Heart left ventricle (tissue), 16 donors: ENCODE measurements at regions of chr2 and their contacts with region 1.

Region 1: DNA sequence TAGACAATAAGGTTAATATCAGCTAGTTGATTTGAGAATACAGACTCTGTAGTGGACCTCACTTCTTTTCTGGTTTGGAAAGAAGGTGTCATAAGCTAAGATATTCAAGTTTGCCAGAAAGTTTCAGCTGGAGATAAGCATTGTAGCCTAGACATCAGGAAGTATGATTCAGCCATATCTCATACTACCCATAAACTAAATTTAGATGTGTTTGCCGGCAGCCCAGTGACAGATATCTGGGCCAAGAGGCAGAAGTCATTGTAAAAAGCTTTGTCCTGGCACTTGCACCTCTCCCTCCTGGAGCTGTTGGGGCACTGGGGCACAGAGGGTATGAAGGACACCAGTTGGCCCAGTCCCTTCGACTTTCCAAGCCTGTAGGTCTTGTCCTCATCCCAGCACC is 128.0 kb downstream of the EPHA4 start:
- DNase-seq: peak in 4 of 5 donors; percentile 29 to 74 (median 62)
- ATAC-seq: peak; percentile 84 to 98 (median 94)
- H3K4me3 ChIP-seq: no peak overlapping the region
- H3K27ac ChIP-seq: peak overlapping the region in 10 of 12 donors; percentile 10 to 76 (median 40)
- H3K4me1 ChIP-seq: peaks cover 0 to 27% (median 12%) of the 10 kb centered on the region in 12 donors
- H3K27me3 ChIP-seq: no peaks in the 10 kb centered on the region
- CTCF ChIP-seq: no peak
- POLR2A ChIP-seq: no peak

Region 2: DNA sequence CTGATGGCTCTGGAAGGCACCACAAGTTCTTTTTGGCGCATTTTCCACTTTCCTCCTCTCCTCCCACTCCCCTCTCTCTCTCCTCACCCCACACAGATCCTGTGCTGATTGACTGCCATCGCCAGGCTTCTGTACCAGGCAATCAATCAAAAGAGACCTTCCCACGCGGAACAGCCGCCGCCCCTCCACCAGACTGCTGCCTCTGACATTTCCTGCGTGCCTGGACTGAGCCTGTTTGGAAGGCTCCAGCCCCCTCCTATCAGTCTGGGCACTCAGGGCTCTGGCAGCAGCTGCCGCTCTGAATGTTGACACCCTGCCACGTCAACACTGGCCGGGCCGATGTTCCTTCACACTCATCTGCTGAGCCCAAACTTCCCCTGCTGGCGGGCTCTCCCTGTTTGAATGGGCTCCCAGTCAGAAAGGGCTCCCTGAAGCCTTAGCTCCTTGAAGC is 339.7 kb before region 1 on chr2:
- intact Hi-C with region 1: loop called in 1 of 10 experiments (anchors 10 kb)
- DNase-seq: peak; percentile 83 to 91 (median 86)
- ATAC-seq: peak; percentile 98 to 99 (median 98)
- H3K4me3 ChIP-seq: peak overlapping the region in 9 of 12 donors; percentile 4 to 25 (median 17)
- H3K27ac ChIP-seq: peak overlapping the region in 11 of 12 donors; percentile 9 to 72 (median 61)
- H3K4me1 ChIP-seq: peaks cover 0 to 28% (median 16%) of the 10 kb centered on the region in 12 donors
- H3K27me3 ChIP-seq: no peaks in the 10 kb centered on the region
- CTCF ChIP-seq: peak in 11 of 12 donors; percentile 8 to 44 (median 20)
- POLR2A ChIP-seq: no peak

Region 3: GRCh38 chr2:221517696-221518151 is 73.6 kb after region 1 on chr2:
- intact Hi-C with region 1: loop called in 1 of 10 experiments (anchors 10 kb)
- DNase-seq: peak in 4 of 5 donors; percentile 20 to 68 (median 43)
- ATAC-seq: peak in 3 of 4 donors; percentile 63 to 67 (median 66)
- H3K4me3 ChIP-seq: peak overlapping the region in 1 of 12 donors; percentile 16
- H3K27ac ChIP-seq: peak overlapping the region in 6 of 12 donors; percentile 25 to 66 (median 38)
- H3K4me1 ChIP-seq: peaks cover 5 to 62% (median 31%) of the 10 kb centered on the region in 12 donors
- H3K27me3 ChIP-seq: no peaks in the 10 kb centered on the region
- CTCF ChIP-seq: no peak
- POLR2A ChIP-seq: no peak

Region 4: GRCh38 chr2:221629468-221629867 is 185.4 kb after region 1 on chr2:
- intact Hi-C with region 1: no loop called
- DNase-seq: no peak
- ATAC-seq: no peak
- H3K4me3 ChIP-seq: no peak overlapping the region
- H3K27ac ChIP-seq: no peak overlapping the region
- H3K4me1 ChIP-seq: no peaks in the 10 kb centered on the region
- H3K27me3 ChIP-seq: peaks cover 0 to 7% (median 0%) of the 10 kb centered on the region in 9 donors
- CTCF ChIP-seq: no peak
- POLR2A ChIP-seq: no peak